ENCODE measurements at regions of chr19 and their contacts with region 1.

Region 1: DNA sequence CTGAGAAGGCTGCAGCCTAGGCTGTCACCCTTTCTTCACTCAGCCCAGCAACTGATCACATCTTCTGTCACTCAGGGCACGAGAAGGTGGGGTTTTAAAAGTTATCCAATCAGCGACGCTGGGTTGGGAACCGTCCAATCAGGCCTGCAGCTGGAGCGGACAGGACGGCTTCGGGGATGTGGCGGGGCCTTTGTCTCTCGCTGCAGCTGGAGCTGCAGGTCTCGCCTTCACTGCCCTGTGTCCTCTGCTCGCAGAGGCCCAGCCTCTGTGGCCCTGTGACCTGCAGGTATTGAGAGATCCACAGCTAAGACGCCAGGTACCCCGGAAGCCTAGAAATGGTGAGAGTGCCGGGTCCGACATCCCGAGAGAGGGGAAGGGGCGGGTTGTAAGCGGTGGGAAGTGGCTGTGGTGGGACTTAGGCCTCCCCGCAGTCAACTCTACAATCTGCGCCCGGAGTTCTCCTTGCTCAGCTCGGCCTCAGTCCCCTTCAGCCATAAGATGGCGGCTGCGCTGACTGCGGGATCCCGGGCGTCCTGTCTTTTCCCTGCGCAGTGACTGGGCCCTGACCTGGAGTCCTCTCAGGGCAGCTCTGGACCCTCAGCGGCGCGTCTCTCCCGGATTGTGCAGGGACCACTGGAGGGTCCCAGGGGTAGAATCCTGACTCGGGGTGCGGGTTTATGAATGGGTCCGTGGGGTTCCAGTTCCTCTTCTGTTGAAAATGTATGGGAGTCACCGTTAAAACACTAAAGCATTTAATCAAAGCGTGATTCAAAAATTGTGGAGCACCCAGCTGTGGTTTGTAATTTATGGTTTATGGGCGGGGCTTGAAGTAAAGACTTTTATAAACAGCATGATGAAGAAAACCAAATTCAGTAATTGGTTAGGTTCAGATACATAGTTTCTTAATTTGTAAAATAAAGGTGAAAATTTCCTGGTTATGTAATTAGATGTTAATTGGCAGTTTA is at the start of gene ZNF714:
- DNase-seq: peak; percentile 55 to 90 (median 80)
- ATAC-seq: peak; percentile 100
- H3K4me3 ChIP-seq: peak within 1 kb of the TSS; percentile 92
- H3K4me3 Mint-ChIP-seq: peak within 1 kb of the TSS; percentile 91 to 100 (median 99)
- H3K27ac ChIP-seq: peak within 1 kb of the TSS; percentile 74
- H3K27ac Mint-ChIP-seq: peak within 1 kb of the TSS; percentile 85 to 99 (median 95)
- H3K4me1 ChIP-seq: no peaks in the 10 kb centered on the region
- H3K4me1 Mint-ChIP-seq: peaks cover 3 to 24% (median 18%) of the 10 kb centered on the region in 7 donors
- H3K27me3 ChIP-seq: no peaks in the 10 kb centered on the region
- H3K27me3 Mint-ChIP-seq: no peaks in the 10 kb centered on the region
- total RNA-seq, gene ZNF714: 7.4 to 22.3 (median 13.3) TPM

Region 2: DNA sequence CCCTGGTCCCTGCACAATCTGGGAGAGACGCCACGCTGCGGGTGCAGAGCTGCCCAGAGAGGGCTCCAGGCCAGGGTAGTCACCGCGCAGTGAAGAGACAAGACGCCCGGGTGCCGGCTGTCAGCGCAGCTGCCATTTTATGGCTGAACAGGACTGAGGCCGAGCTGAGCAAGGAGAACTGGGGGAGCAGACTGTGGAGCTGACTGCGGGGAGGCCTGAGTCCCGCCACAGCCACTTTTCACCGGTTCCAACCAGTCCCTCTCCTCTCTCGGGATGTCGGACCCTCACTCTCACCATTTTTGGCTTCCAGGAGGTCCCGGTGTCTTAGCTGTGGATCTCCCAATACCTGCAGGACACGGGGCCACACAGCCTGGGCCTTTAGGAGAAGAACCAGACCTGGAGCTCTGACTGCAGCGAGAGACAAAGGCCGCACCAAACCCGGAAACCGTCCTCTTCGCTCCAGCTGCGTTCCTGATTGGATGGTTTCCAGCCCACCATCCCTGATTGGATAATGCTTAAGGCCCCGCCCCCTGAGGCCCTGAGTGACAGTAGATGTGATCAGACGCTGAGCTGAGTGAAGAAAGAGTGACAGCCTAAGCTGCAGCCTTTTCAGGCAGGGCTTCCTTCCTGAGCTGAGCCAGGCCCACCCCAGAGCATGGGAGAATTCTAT is 421.0 kb before region 1 on chr19 and contains the start of gene ZNF626:
- CTCF ChIA-PET with region 1: no interaction called
- POLR2A ChIA-PET with region 1: no interaction called
- intact Hi-C with region 1: loop called in 1 of 2 experiments (anchors 5 kb)
- DNase-seq: peak; percentile 66 to 92 (median 87)
- ATAC-seq: peak; percentile 99
- H3K4me3 ChIP-seq: peak within 1 kb of the TSS; percentile 89
- H3K4me3 Mint-ChIP-seq: peak within 1 kb of the TSS; percentile 83 to 97 (median 92)
- H3K27ac ChIP-seq: peak within 1 kb of the TSS; percentile 91
- H3K27ac Mint-ChIP-seq: peak within 1 kb of the TSS; percentile 86 to 97 (median 95)
- H3K4me1 ChIP-seq: peaks cover 0 to 6% of the 10 kb centered on the region in 2 donors
- H3K4me1 Mint-ChIP-seq: peaks cover 0 to 54% (median 47%) of the 10 kb centered on the region in 7 donors
- H3K27me3 ChIP-seq: no peaks in the 10 kb centered on the region
- H3K27me3 Mint-ChIP-seq: no peaks in the 10 kb centered on the region
- total RNA-seq, gene ZNF626: 2.2 to 20.0 (median 12.4) TPM